ENCODE measurements at regions of chr7 and their contacts with region 1.

Region 1: DNA sequence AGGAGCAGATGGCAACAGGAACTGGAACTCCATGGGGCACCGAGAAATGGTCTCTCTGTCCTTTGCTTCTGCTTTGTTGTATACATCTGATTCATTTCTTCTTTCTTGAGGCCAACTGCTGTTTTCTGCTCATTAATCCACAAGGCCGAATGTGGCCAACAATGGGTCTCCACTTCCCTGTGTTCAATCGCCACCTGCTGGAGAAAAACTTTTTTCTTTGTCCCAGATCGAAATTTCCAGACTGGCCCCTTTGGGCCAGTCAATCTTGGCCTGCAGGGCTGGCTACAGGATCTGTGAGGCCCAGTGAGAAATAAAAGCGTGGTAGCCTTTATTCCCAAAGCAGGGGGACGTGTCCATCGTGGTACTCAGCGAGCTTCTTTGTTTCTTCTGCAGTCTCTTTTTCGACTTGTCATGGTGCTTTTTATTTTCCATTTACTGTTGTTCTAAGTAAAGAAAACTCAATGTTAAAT is 58.8 kb downstream of the PARP12 start:
- DNase-seq: peak; percentile 43

Region 2: DNA sequence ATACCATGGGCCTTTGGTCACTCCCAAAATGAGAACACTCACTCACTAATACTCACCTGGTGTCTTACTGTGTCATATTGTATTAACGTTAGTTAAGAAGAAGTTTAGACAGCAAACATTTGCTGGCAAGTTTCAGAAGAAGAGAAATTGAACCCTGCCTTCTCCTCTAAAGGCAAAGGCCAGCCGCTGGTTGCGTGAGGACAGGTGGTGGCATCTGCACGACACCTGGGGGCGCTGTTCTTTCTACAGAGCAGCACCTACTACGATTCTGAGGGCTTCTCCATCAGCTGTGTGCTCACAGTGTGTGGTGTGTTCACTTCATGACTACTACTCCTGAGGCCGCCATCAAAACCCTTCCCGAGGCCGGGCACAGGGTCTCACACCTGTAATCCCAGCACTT is 498.4 kb before region 1 on chr7:
- intact Hi-C with region 1: loop called in 1 of 2 experiments (anchors 10 kb)
- DNase-seq: no peak

Region 3: DNA sequence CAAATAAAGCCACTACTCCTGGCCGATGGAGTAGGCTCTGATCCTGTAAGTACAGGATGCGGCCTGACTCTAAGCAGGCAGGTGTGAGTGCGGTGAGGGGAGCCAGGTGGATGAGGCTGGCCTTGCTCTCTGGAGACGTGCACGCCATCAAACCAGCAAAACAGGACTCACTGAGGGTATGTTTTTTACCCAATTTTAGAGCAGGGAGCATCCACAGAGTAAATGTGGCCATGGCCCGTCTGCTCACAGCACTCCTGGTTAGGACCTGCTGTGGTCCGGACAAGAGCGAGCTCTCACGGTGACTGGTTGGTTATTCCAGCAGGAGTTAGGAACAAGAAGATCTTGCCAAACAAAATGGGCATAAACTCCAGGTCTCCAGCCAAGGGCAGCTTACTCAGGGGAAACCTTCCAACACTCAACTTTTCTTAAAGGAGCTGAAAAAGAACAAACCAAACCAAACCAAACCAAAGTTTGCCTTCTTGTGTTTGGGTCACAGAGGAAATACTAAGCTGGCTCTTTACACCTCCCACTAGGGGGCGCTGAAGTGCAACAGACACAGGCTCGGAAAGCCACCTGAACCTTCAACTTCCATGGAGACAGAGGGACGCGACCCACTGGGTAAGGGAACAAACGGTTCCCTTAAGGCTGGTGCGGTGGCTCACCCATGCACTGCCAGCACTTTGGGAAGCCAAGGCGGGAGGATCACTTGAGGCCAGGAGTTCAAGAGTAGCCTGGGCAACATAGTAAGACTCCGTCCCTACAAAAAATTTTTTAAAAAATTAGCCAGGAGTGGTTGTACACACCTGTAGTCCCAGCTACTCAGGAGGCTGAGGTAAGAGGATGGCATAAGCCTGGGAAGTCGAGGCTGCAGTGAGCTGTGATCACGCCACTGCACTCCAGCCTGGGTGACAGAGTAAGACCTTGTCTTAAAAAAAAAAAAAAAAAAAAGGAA is 358.1 kb before region 1 on chr7:
- intact Hi-C with region 1: loop called in 1 of 2 experiments (anchors 5 kb)
- DNase-seq: peak; percentile 92

Region 4: DNA sequence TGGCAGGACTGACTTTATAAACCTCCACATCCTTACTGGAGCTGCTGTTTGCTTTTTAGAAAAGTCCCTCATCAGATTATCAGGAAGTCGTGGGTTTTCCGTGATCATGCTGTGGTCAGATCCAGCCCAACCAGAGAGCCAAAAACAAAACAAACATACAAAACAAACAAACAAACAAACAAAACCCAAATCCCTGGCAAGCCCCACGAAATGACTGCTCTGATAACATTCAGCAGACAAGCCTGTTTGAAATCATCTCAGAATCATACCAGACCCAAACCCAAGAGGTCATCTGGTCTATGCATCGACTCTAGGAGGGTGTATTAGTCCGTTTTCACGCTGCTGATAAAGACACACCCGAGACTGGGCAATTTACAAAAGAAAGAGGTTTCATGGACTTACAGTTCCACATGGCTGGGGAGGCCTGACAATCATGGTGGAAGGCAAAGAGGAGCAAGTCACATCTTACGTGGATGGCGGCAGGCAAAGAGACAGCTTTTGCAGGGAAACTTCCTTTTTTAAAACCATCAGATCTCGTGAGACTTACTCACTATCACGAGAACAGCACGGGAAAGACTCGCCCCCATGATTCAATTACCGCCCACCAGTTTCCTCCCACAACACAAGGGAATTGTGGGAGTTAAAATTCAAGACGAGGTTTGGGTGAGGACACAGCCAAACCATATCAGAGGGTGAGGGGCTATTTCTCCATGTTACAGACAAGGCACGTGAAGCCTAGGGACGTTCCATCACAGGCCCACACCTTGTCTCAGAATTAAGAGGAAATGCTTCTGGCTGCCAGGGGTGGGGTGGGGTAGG is 26.9 kb before region 1 on chr7:
- intact Hi-C with region 1: no loop called
- DNase-seq: no peak

Measured in posterior vena cava (tissue), 2 donors.